ENCODE measurements at regions of chr22 and their contacts with region 1.

Region 1: DNA sequence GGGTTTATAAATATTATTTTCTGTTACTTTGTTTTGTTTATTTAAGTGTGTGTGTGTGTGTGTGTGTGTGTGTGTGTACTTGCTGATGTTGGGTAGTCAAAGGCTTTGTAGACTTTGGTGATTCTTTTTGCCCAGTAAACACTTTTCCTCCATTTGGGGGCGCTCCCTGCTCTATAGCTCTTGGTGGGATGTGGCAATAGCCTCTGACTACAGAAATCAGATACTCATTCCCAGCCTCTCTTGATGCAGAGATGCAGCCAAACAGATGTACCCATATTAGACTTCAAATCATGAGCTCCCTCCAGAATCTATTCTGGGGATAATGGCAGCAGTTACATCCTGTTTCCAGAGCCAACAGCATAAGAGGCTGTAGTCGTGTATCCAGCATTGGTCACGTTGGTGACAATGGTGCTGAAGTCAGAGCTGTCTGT is 33.4 kb upstream of the APOL5 start:
- DNase-seq: no peak
- ATAC-seq: peak; percentile 91 to 98 (median 96)
- H3K4me3 ChIP-seq: no peak overlapping the region
- H3K27ac ChIP-seq: peak overlapping the region; percentile 92
- H3K4me1 ChIP-seq: peaks cover 19% of the 10 kb centered on the region
- H3K27me3 ChIP-seq: no peaks in the 10 kb centered on the region
- CTCF ChIP-seq: peak; percentile 31

Region 2: DNA sequence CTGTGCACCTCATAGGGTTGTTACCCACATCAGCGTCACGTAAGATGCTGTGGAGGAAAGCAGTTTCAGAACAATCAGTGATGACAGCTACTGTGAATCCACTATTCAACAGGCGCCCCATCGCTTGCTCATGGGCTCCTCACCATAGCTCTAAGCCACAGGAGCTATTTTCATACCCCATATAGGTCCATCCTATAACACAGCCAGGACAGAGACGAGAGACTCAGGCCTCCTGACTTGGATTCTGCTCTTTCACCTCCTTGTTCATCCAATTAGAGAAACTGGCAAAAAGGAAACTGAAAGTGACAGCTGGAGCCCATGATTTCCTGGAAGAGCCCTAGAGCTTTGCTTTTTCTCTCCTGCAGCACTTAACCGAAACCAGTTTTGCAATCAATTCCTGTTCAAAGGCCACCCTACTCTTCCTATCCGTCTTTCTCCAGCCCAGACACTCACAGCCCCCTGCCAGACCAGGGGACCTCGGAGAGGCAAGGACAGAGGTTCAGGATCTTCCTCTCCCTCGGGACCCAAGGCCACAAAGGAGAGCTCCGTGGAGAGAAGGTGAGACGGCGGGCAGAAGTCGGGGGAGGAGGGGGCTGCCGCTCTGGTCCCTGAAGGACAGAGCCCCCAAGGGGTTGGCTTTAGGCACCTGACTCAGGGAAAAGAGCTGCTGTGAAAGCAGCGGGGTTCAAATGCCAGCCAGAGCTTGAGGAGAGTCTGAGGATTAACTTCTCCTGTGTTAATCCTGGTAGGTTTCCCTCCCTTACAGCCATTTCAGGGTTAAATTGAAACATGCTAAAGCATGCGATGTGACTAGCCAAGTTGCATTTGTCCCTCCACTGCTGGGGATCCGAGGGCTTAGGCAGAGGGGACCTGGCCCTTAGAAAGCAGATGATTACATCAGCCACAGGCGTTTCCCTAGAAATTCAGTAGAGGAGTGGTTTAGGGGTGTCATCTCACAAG is 35.9 kb before region 1 on chr22 and contains the start of gene APOL6:
- intact Hi-C with region 1: no loop called
- DNase-seq: peak in 1 of 2 donors; percentile 58
- ATAC-seq: peak; percentile 55 to 74 (median 66)
- H3K4me3 ChIP-seq: peak within 1 kb of the TSS; percentile 91
- H3K27ac ChIP-seq: peak within 1 kb of the TSS; percentile 82
- H3K4me1 ChIP-seq: peaks cover 33% of the 10 kb centered on the region
- H3K27me3 ChIP-seq: no peaks in the 10 kb centered on the region
- CTCF ChIP-seq: no peak
- total RNA-seq, gene APOL6: 1.8 to 9.5 (median 6.1) TPM

Region 3: GRCh38 chr22:35728639-35729308 is 44.5 kb after region 1 on chr22:
- intact Hi-C with region 1: loop called in 1 of 2 experiments (anchors 5 kb)
- DNase-seq: no peak
- ATAC-seq: no peak
- H3K4me3 ChIP-seq: no peak overlapping the region
- H3K27ac ChIP-seq: no peak overlapping the region
- H3K4me1 ChIP-seq: peaks cover under 1% of the 10 kb centered on the region
- H3K27me3 ChIP-seq: no peaks in the 10 kb centered on the region
- CTCF ChIP-seq: no peak

Region 4: GRCh38 chr22:35739076-35739930 is 55.0 kb after region 1 on chr22:
- intact Hi-C with region 1: loop called (anchors 5 kb)
- DNase-seq: no peak
- ATAC-seq: peak; percentile 34 to 59 (median 48)
- H3K4me3 ChIP-seq: no peak overlapping the region
- H3K27ac ChIP-seq: peak overlapping the region; percentile 91
- H3K4me1 ChIP-seq: peaks cover 36% of the 10 kb centered on the region
- H3K27me3 ChIP-seq: no peaks in the 10 kb centered on the region
- CTCF ChIP-seq: peak; percentile 41

Region 5: DNA sequence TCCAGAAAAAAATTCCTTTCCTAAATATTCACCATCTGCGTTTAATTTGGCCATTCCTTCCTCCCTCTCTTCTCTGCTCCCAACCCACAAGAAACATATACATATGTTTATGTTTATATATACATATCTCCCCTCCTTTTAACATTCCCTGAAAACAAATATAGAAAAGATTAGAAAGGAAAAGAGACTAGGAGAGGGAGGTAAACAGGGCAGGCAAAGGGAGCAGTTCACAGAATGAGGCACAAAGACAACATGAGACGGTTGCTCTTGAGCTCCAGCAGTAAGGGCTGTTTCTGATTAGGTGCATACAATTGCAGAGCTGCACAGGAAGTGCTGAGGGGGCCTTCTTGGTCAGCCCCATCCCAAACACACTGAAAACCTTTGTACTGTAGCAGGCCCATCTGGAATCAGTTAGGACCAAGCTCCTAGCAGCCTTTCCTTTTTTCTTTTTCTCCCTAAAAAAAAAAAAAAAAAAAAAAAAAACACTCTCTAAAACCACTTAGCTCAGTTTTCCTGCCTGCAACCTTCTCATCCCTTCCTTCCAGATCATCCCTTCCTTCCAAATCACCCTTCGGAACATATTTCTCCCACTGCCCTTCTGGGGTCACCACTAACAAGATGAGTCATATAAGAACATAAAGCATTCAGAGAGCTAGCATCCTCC is 287.3 kb after region 1 on chr22:
- intact Hi-C with region 1: no loop called
- DNase-seq: no peak
- ATAC-seq: peak in 2 of 4 donors; percentile 41 to 55
- H3K4me3 ChIP-seq: no peak overlapping the region
- H3K27ac ChIP-seq: no peak overlapping the region
- H3K4me1 ChIP-seq: peaks cover 29% of the 10 kb centered on the region
- H3K27me3 ChIP-seq: no peaks in the 10 kb centered on the region
- CTCF ChIP-seq: no peak